ENCODE measurements at regions of chr1 and their contacts with region 1.

Region 1: DNA sequence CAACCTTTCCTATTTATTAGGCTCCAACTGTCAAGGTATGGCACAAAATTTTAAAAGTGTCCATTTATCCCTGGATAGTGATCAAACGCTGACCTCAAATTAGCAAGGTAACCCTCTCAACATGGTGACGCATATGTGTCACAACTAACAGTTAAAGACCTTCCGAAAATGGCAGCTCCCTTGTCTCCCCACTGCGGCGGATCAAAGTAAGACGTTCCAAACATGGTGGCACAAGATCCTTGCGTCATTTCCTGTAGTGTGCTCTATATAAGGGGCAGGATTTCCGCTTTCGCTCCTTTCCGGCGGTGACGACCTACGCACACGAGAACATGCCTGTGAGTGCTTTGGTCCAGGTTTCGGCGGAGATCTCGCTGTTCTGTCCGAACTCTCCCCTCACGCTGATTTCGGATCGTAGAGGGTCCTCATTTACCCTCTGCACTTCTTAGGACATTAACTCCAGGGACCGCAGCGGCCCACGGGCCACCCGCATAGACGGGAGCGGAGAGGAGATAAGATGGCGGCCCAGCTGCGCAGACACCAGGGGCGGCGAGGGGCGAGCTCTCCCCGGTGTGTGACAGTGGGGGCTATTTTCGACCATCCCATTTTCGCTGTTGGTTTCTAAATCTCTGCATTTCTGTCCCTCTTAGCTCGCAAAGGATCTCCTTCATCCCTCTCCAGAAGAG is at the start of gene RPS27:
- DNase-seq: peak; percentile 98
- ATAC-seq: peak; percentile 51
- H3K4me3 ChIP-seq: peak within 1 kb of the TSS; percentile 89 to 96
- H3K27ac ChIP-seq: peak within 1 kb of the TSS; percentile 80
- H3K4me1 ChIP-seq: peaks cover 7 to 37% of the 10 kb centered on the region in 2 experiments
- H3K27me3 ChIP-seq: no peaks in the 10 kb centered on the region
- CTCF ChIP-seq: no peak
- POLR2A ChIP-seq: peak; percentile 99
- RAD21 ChIP-seq: no peak
- total RNA-seq, gene RPS27: 1,905 TPM

Region 2: GRCh38 chr1:153572569-153573015 is 418.0 kb before region 1 on chr1:
- CTCF ChIA-PET with region 1: no interaction called
- POLR2A ChIA-PET with region 1: interaction called, 4 read pairs
- RAD21 ChIA-PET with region 1: no interaction called
- intact Hi-C with region 1: loop called (anchors 1 kb)
- DNase-seq: peak; percentile 84
- ATAC-seq: peak; percentile 82
- H3K4me3 ChIP-seq: peak overlapping the region in 1 of 2 experiments; percentile 20; a peak in 1 of 4 replicates
- H3K27ac ChIP-seq: peak overlapping the region; percentile 57
- H3K4me1 ChIP-seq: peaks cover 32 to 53% of the 10 kb centered on the region in 2 experiments
- H3K27me3 ChIP-seq: no peaks in the 10 kb centered on the region
- CTCF ChIP-seq: peak in 2 of 3 experiments; percentile 91 to 97; a peak in 4 of 6 replicates
- POLR2A ChIP-seq: no peak
- RAD21 ChIP-seq: no peak

Region 3: DNA sequence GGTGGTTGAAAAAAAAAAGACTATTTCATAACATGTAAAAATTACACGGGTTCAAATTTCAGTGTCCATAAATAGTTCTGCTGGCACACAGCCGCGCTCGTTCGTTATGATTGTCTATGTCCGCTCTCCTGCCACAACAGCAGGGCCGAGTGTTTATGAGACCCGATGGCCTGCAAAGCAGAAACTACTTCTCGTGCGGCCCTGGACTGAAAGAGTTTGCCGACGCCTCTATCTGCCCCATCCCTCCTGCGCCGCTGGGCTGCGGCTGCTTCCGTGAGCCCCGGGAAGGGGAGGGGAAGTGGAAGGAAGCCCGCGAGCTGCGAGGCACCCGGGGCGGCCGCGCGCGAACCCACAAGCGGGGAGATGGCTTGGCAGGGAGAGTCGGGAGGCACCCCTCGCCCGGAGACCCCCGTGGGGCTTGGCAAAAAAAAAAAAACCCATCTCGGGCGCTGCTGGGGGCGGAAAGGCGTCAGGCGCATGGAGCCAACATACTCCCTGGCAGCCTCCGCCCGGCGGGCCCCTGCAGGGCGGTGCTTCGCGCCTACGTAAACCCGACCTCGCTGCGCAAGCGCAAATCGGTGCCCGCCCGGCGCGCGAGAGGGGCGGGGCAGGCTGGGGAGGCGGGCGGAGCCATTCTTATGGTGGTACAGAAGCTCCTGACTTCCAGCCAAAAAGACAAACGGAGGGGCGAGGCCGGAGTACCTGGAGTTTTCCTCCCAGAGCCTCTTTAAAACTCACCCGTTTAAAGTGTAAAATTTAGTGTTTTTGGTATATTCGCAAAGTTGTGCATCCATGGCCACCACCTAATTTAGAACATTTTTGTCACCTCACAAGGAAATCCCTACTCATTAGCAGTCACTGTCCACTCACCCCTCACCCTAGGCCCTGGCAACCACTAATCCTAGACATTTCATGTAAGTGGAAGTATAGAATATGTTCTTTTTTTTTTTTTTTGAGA is 207.1 kb before region 1 on chr1:
- CTCF ChIA-PET with region 1: no interaction called
- POLR2A ChIA-PET with region 1: no interaction called
- RAD21 ChIA-PET with region 1: no interaction called
- intact Hi-C with region 1: loop called (anchors 5 kb)
- DNase-seq: peak; percentile 71
- ATAC-seq: peak; percentile 94
- H3K4me3 ChIP-seq: peak overlapping the region; percentile 60 to 68
- H3K27ac ChIP-seq: peak overlapping the region; percentile 69
- H3K4me1 ChIP-seq: peaks cover 6 to 14% of the 10 kb centered on the region in 2 experiments
- H3K27me3 ChIP-seq: no peaks in the 10 kb centered on the region
- CTCF ChIP-seq: 0 out of 6 replicates have a peak, but pooled peaks of 1 of the 3 experiments have one; percentile 3
- POLR2A ChIP-seq: peak; percentile 89
- RAD21 ChIP-seq: peak; percentile 5; the same call in 1 of the 2 replicates

Region 4: DNA sequence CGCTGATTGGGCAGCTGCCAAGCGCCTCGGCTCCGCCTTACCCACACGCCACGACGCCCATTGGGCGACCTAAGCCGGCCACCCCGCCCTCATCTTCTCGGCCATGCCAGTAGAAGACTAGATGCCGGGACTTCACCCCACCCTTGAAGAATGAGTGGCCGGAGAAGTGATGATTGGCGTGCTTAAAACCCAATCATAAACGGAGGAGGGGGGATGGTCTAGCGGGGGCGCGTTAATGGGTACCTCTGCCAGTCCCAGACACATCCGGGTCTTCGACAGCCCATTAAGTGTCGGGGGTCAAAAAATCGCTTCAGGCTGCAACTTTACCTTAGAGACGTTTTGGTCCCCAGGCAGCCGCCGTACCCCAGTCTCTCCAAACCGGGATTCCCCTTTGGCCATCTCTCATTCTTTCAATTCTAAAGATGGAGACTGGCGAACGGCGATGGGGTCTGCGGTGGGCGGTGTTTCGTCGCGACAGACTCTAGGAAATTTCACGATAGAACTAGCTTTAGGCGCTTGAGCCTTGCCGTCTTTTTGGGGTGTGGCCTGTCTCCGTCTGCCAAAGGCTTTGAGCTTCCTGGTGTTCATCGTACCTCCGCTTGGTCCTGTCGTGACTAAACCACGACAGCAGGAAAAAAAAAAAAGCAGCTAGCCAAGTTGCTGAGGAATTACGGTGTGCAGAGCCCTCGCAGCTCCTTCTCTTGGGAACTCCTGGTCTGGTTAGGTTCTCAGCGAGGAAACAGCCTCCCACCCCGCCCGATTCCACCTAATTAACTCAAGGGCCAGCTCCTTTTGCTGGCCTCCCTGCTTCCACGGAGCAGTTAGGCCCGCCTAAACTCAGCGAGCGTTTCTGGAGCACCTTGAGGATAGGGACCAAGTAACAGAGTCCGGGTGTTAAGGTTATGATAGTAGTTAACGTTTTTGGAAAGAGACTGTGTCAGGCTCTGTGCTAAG is 67.4 kb before region 1 on chr1 and contains the start of gene GATAD2B:
- CTCF ChIA-PET with region 1: no interaction called
- POLR2A ChIA-PET with region 1: interaction called, 12 read pairs
- RAD21 ChIA-PET with region 1: no interaction called
- intact Hi-C with region 1: no loop called
- DNase-seq: peak; percentile 100
- ATAC-seq: peak; percentile 97
- H3K4me3 ChIP-seq: peak within 1 kb of the TSS; percentile 84 to 85
- H3K27ac ChIP-seq: peak within 1 kb of the TSS; percentile 83
- H3K4me1 ChIP-seq: peaks cover 16 to 33% of the 10 kb centered on the region in 2 experiments
- H3K27me3 ChIP-seq: no peaks in the 10 kb centered on the region
- CTCF ChIP-seq: no peak
- POLR2A ChIP-seq: peak; percentile 41
- RAD21 ChIP-seq: no peak
- total RNA-seq, gene GATAD2B: 50.2 TPM

Region 5: GRCh38 chr1:153936011-153936802 is 54.4 kb before region 1 on chr1:
- CTCF ChIA-PET with region 1: no interaction called
- POLR2A ChIA-PET with region 1: no interaction called
- RAD21 ChIA-PET with region 1: no interaction called
- intact Hi-C with region 1: no loop called
- DNase-seq: no peak
- ATAC-seq: no peak
- H3K4me3 ChIP-seq: no peak overlapping the region
- H3K27ac ChIP-seq: no peak overlapping the region
- H3K4me1 ChIP-seq: no peaks in the 10 kb centered on the region
- H3K27me3 ChIP-seq: no peaks in the 10 kb centered on the region
- CTCF ChIP-seq: no peak
- POLR2A ChIP-seq: no peak
- RAD21 ChIP-seq: no peak

Region 6: DNA sequence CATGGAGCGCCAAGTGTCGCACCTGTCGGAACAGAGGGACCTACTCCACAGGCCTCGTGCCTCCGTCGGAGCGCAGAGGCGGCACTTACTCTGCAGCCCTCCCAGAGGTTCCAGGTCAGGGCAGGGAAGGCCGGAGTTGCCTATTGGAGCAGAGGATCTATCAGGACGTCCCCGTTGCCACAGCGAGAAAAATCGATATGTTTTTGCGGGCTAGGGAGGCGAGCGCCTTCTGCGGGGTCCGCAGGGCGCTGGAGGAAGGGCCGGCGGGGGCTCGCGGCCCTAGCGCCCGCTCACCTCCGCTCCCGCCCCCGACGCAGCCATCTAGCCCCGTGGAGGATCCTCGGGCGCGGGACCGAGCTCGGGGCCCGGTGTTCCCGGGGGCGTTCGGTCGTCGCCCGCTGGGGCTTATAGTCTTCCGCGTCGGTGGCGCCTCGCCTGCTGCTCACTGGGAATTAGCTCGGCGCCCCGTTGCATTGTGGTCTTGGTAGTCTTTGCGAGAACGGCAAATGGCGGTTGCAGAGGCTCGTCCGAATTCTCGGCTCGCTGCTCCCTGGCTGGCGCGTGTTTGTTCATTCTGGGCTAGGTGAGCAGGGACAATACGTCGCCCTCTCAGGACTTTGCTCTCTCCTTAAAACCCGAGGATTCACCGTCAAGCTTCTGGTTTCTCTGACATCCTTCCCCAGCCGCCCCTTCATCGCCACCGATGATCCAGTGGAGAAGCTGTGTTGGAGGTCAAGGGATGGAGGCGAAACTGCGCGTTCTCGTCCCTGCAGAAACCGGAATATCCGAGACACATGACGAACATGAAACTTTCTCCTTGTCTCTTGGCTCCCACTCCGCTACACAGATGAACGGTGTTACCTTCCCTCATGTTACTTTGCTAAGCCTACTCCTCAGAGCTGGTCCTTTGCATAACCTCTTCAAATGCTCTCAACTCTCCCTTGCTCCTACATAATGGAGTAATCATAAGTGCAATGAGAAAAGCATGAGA is 13.1 kb before region 1 on chr1 and contains the start of gene JTB:
- CTCF ChIA-PET with region 1: interaction called, 15 read pairs
- POLR2A ChIA-PET with region 1: interaction called, 20 read pairs
- RAD21 ChIA-PET with region 1: no interaction called
- intact Hi-C with region 1: no loop called
- DNase-seq: no peak
- ATAC-seq: peak; percentile 91
- H3K4me3 ChIP-seq: peak within 1 kb of the TSS; percentile 81 to 100
- H3K27ac ChIP-seq: peak within 1 kb of the TSS; percentile 91
- H3K4me1 ChIP-seq: peaks cover 0 to 14% of the 10 kb centered on the region in 2 experiments; a peak in 2 of 4 replicates
- H3K27me3 ChIP-seq: no peaks in the 10 kb centered on the region
- CTCF ChIP-seq: no peak
- POLR2A ChIP-seq: peak; percentile 48
- RAD21 ChIP-seq: no peak
- total RNA-seq, gene JTB: 123 TPM

Measured in HCT116 (cell line).